ENCODE measurements at regions of chr16 and their contacts with region 1.

Region 1: DNA sequence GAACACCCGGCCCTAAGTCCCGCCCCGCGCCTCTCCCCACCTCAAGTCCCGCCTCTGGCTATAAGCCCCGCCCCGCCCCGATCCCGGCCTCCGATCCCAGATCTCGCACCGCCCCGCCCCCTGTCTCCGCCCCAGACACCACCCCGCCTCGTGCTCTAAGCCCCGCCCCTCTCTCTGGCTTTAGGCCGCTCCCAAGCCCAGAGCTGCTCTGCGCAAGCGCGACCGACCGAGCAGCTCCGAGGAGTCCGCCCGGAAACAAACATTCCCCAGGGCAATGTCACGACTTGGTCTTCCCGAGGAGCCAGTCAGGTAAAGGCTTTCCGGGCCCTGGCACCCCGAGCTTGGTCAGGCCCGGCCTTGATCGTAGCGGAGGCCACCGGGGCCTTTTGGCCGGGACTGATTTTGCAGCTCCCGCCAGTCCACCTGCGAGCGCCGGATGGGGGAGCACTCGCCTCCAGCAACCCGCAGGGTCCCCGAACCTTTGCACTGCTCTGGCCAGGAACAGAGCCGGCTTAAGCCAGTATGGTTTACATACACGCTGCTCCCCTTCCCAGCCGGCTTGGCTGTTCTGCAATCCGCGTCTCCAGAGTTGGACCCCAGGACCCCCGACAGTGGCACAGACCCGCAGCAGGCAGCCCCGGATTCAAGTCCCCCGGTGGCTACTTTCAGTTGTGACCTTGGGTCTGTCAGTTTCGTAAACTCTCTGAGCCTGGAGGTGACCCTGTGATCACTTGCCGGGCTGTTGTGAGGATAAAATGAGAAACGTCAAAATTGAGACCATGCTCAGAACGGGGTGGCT is at the start of gene NUDT7:
- DNase-seq: peak; percentile 100
- ATAC-seq: peak; percentile 100
- H3K4me3 ChIP-seq: peak within 1 kb of the TSS; percentile 48 to 87
- H3K27ac ChIP-seq: peak within 1 kb of the TSS in 1 of 2 donors; percentile 90
- H3K4me1 ChIP-seq: no peaks in the 10 kb centered on the region
- H3K27me3 ChIP-seq: no peaks in the 10 kb centered on the region
- total RNA-seq, gene NUDT7: 3.8 to 12.1 TPM

Region 2: GRCh38 chr16:77971306-77972271 is 249.1 kb after region 1 on chr16:
- intact Hi-C with region 1: loop called in 1 of 2 experiments (anchors 5 kb)
- DNase-seq: peak; percentile 85 to 96
- ATAC-seq: peak; percentile 87
- H3K4me3 ChIP-seq: no peak overlapping the region
- H3K27ac ChIP-seq: no peak overlapping the region
- H3K4me1 ChIP-seq: no peaks in the 10 kb centered on the region
- H3K27me3 ChIP-seq: no peaks in the 10 kb centered on the region

Region 3: GRCh38 chr16:78022347-78023060 is 300.0 kb after region 1 on chr16 and contains the start of gene CLEC3A:
- intact Hi-C with region 1: no loop called
- DNase-seq: no peak
- ATAC-seq: no peak
- H3K4me3 ChIP-seq: no peak within 1 kb of the TSS
- H3K27ac ChIP-seq: no peak within 1 kb of the TSS
- H3K4me1 ChIP-seq: no peaks in the 10 kb centered on the region
- H3K27me3 ChIP-seq: no peaks in the 10 kb centered on the region
- total RNA-seq, gene CLEC3A: not detected

Measured in aorta (tissue), 5 donors.